ENCODE measurements at regions of chr10 and their contacts with region 1.

Region 1: DNA sequence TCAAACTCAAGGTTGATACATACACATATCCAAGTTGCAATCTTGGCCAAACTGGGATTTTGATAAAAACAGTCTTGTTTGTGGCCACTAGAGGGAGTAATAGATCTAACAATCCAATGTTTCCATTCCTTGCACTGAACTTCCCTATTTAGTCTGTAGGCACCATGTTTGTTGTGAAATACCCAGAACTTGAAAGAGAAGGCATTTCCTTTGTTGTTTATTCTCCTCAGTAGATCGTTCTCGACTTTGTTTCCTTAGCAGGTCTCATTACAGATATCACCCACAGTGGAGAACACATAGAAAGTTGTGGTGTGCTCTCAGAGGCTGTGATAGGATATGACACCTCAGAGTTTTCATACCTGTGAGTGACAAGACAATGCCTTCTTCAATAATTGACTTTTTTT is 70.3 kb upstream of the MXI1 start:
- DNase-seq: peak in 2 of 5 donors; percentile 80 to 83
- H3K4me3 ChIP-seq: no peak overlapping the region
- H3K27ac ChIP-seq: peak overlapping the region in 1 of 2 donors; percentile 53
- H3K4me1 ChIP-seq: peaks cover 0 to 8% (median 8%) of the 10 kb centered on the region in 3 donors
- H3K27me3 ChIP-seq: no peaks in the 10 kb centered on the region
- CTCF ChIP-seq: peak; percentile 85

Region 2: GRCh38 chr10:109978481-109978880 is 158.7 kb before region 1 on chr10:
- intact Hi-C with region 1: no loop called
- DNase-seq: no peak
- H3K4me3 ChIP-seq: no peak overlapping the region
- H3K27ac ChIP-seq: no peak overlapping the region
- H3K4me1 ChIP-seq: peaks cover 0 to 40% (median 12%) of the 10 kb centered on the region in 3 donors
- H3K27me3 ChIP-seq: no peaks in the 10 kb centered on the region
- CTCF ChIP-seq: peak; percentile 40

Region 3: GRCh38 chr10:110206995-110207804 is 70.1 kb after region 1 on chr10 and contains the start of gene MXI1:
- intact Hi-C with region 1: loop called (anchors 10 kb)
- DNase-seq: peak; percentile 85 to 92 (median 87)
- H3K4me3 ChIP-seq: peak within 1 kb of the TSS; percentile 71 to 93 (median 78)
- H3K27ac ChIP-seq: peak within 1 kb of the TSS in 1 of 2 donors; percentile 40
- H3K4me1 ChIP-seq: peaks cover 0 to 8% (median 2%) of the 10 kb centered on the region in 3 donors
- H3K27me3 ChIP-seq: no peaks in the 10 kb centered on the region
- CTCF ChIP-seq: no peak
- total RNA-seq, gene MXI1: 29.0 TPM

Region 4: DNA sequence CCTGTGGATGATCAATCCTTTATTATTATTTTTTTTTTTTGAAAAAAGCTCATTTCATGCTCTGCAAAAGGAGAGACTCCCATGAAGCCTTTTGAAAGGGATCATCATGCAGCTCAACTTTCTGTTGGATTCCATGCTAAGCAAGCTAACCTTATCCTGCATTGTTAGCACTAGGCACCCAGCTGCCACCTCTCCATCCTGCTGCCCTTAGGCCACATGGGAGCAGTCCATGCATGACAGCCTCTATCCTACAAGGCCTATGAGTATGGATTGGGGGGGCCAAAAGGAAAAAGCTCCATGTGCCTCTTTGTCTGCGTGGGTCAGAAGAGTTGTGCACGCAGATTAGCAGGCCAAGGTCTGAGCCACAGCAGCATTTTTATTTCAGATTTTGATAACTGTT is 148.4 kb after region 1 on chr10:
- intact Hi-C with region 1: loop called (anchors 10 kb)
- DNase-seq: no peak
- H3K4me3 ChIP-seq: no peak overlapping the region
- H3K27ac ChIP-seq: no peak overlapping the region
- H3K4me1 ChIP-seq: peaks cover 0 to 2% (median 0%) of the 10 kb centered on the region in 3 donors
- H3K27me3 ChIP-seq: no peaks in the 10 kb centered on the region
- CTCF ChIP-seq: no peak

Measured in kidney (tissue), 22 donors.